ENCODE measurements at regions of chr10 and their contacts with region 1.

Region 1: GRCh38 chr10:59181668-59182067 is 5.2 kb downstream of the PHYHIPL start:
- DNase-seq: peak; percentile 88
- ATAC-seq: peak; percentile 64
- H3K4me3 ChIP-seq: peak overlapping the region; percentile 67 to 89 (median 74)
- H3K27ac ChIP-seq: peak overlapping the region; percentile 51
- H3K4me1 ChIP-seq: peaks cover 31% of the 10 kb centered on the region
- H3K27me3 ChIP-seq: no peaks in the 10 kb centered on the region; a peak in 1 of 5 replicates
- CTCF ChIP-seq: peak; percentile 83
- EP300 ChIP-seq: 0 out of 4 replicates have a peak, but pooled peaks of 1 of the 2 experiments have one; percentile 8
- POLR2A ChIP-seq: no peak
- RAD21 ChIP-seq: peak; percentile 79

Region 2: GRCh38 chr10:58892031-58892531 is 289.6 kb before region 1 on chr10:
- CTCF ChIA-PET with region 1: no interaction called
- POLR2A ChIA-PET with region 1: no interaction called
- in situ Hi-C with region 1: no loop called
- intact Hi-C with region 1: loop called (anchors 5 kb)
- DNase-seq: no peak
- ATAC-seq: no peak
- H3K4me3 ChIP-seq: no peak overlapping the region
- H3K27ac ChIP-seq: no peak overlapping the region
- H3K4me1 ChIP-seq: peaks cover 25% of the 10 kb centered on the region
- H3K27me3 ChIP-seq: no peaks in the 10 kb centered on the region; a peak in 1 of 5 replicates
- CTCF ChIP-seq: no peak
- EP300 ChIP-seq: no peak
- POLR2A ChIP-seq: no peak
- RAD21 ChIP-seq: no peak

Region 3: GRCh38 chr10:58967551-58968388 is 213.9 kb before region 1 on chr10:
- CTCF ChIA-PET with region 1: interaction called, 3 read pairs
- POLR2A ChIA-PET with region 1: interaction called, 107 read pairs
- in situ Hi-C with region 1: loop called (anchors 5 kb)
- intact Hi-C with region 1: loop called (anchors 2 kb)
- DNase-seq: peak; percentile 93
- ATAC-seq: peak; percentile 99
- H3K4me3 ChIP-seq: peak overlapping the region; percentile 33 to 72 (median 55)
- H3K27ac ChIP-seq: peak overlapping the region; percentile 77
- H3K4me1 ChIP-seq: peaks cover 84% of the 10 kb centered on the region
- H3K27me3 ChIP-seq: no peaks in the 10 kb centered on the region
- CTCF ChIP-seq: peak; percentile 31; the same call in 1 of the 2 replicates
- EP300 ChIP-seq: peak; percentile 39 to 60; a peak in 3 of 4 replicates
- POLR2A ChIP-seq: peak; percentile 71 to 85
- RAD21 ChIP-seq: peak; percentile 45; the same call in 1 of the 2 replicates

Region 4: DNA sequence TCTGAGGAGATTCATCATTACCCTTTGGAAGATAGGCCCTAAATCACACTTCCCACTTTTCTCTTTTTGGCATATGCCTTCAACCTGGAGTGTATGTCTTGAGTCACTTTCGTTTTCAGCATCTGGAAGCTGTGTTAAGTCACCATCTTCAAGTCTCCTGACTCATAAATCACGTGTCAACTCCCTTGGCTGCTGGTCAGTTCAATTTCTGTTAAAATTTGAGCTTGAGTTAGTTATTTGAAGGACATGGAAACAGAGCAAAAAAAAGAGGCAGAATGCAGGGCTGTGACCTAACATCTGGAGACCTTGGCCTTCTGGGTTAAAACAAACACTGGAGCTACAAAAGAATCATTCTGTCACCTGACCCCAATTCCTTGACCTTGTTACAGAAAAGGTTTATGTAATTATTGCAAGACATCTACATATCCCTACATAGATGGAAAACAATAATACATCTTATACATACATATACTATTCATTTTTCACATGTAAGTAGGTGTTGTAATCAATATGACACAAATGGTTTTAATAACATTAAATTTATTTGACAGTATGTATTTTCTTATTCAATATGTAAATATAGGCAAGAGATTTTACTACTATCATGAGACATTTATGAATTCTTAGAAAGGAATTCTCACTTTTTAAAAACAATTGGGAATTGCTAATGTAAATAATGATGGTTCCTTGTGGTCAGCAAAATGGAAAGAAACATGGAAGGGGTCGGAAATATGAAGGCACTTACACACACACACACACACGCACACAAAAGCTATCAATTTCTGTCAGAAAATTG is 175.0 kb before region 1 on chr10:
- CTCF ChIA-PET with region 1: no interaction called
- POLR2A ChIA-PET with region 1: interaction called, 84 read pairs
- in situ Hi-C with region 1: no loop called
- intact Hi-C with region 1: loop called (anchors 1 kb)
- DNase-seq: peak; percentile 86
- ATAC-seq: peak; percentile 26; the same call in 2 of the 3 replicates
- H3K4me3 ChIP-seq: peak overlapping the region in 2 of 3 experiments; percentile 17 to 45; a peak in 2 of 6 replicates
- H3K27ac ChIP-seq: peak overlapping the region; percentile 87
- H3K4me1 ChIP-seq: peaks cover 98% of the 10 kb centered on the region
- H3K27me3 ChIP-seq: no peaks in the 10 kb centered on the region
- CTCF ChIP-seq: no peak
- EP300 ChIP-seq: peak in 1 of 2 experiments; percentile 98; a peak in 2 of 4 replicates
- POLR2A ChIP-seq: no peak
- RAD21 ChIP-seq: no peak

Region 5: DNA sequence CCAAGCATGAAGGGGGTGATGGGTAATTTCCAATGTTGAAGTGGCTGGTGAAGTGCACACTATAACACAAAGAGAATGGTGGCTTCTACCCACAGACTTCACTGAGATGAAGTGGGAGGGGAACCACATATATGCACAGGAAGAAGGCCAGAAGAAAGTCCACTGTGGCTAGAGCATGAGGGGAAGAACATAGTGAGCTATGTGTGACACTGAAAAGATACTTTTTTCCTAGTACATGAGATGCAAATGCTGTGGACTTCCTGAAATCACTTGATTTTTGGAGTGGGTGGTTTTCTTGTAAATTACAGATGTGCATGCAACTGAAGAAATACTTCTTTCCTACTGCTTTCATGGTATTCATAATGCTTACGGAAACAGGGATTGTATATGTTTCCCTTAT is 120.8 kb before region 1 on chr10:
- CTCF ChIA-PET with region 1: no interaction called
- POLR2A ChIA-PET with region 1: interaction called, 10 read pairs
- in situ Hi-C with region 1: no loop called
- intact Hi-C with region 1: loop called (anchors 5 kb)
- DNase-seq: no peak
- ATAC-seq: no peak
- H3K4me3 ChIP-seq: no peak overlapping the region
- H3K27ac ChIP-seq: no peak overlapping the region
- H3K4me1 ChIP-seq: peaks cover 82% of the 10 kb centered on the region
- H3K27me3 ChIP-seq: no peaks in the 10 kb centered on the region
- CTCF ChIP-seq: no peak
- EP300 ChIP-seq: no peak
- POLR2A ChIP-seq: no peak
- RAD21 ChIP-seq: no peak

Region 6: GRCh38 chr10:59079386-59080226 is 102.1 kb before region 1 on chr10:
- CTCF ChIA-PET with region 1: no interaction called
- POLR2A ChIA-PET with region 1: interaction called, 56 read pairs
- in situ Hi-C with region 1: loop called (anchors 10 kb)
- intact Hi-C with region 1: no loop called
- DNase-seq: peak; percentile 39
- ATAC-seq: no peak
- H3K4me3 ChIP-seq: no peak overlapping the region
- H3K27ac ChIP-seq: peak overlapping the region; percentile 35
- H3K4me1 ChIP-seq: peaks cover 67% of the 10 kb centered on the region
- H3K27me3 ChIP-seq: no peaks in the 10 kb centered on the region
- CTCF ChIP-seq: no peak
- EP300 ChIP-seq: peak in 1 of 2 experiments; percentile 31; a peak in 1 of 4 replicates
- POLR2A ChIP-seq: no peak
- RAD21 ChIP-seq: no peak

Measured in HepG2 (cell line).